Activated CD4-positive, alpha-beta T cell treated with anti-CD3 and anti-CD28 coated beads for 36 hours (primary cell): ENCODE measurements at regions of chr6 and their contacts with region 1.

Region 1: DNA sequence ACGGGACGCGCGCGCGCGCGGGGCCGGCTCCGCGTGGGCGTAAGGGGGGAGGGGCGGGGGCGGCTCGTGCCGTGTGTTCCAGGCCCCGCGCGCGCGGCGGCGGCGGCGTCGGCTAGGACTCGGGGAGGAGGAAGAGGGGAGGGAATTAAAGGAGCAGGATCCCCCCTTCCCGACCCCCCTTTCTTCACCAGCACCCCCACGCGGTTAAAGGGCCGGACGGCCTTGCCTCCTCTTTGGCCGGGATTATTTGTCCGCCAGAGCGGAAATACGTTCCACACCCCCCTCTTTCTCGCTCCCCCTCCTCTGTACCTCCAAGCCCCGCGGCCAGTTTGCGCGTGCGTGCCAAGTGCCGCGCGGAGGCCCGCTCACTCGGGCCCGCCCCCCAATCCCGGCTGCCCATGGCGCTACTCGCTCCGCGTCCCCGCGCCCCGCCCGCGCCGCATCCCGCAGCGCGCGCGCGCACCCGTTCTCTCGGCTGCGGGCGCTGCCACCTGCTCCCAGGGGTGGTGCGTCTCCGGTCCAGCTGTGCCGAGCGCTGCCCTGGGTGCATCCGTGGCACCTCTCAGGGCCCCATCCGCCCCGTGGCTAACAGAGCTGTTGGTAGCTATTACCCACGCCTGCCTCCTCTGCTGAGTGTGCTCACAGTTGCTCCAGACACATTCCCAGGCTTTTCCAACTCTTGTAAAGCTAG is at the start of gene ZBTB12:
- DNase-seq: peak; percentile 92
- ATAC-seq: peak; percentile 63
- H3K4me3 Mint-ChIP-seq: peak within 1 kb of the TSS; percentile 69
- H3K27ac Mint-ChIP-seq: peak within 1 kb of the TSS; percentile 78
- H3K4me1 Mint-ChIP-seq: peaks cover 25% of the 10 kb centered on the region
- H3K27me3 Mint-ChIP-seq: no peaks in the 10 kb centered on the region
- total RNA-seq, gene ZBTB12: 1.9 to 2.4 TPM

Region 2: DNA sequence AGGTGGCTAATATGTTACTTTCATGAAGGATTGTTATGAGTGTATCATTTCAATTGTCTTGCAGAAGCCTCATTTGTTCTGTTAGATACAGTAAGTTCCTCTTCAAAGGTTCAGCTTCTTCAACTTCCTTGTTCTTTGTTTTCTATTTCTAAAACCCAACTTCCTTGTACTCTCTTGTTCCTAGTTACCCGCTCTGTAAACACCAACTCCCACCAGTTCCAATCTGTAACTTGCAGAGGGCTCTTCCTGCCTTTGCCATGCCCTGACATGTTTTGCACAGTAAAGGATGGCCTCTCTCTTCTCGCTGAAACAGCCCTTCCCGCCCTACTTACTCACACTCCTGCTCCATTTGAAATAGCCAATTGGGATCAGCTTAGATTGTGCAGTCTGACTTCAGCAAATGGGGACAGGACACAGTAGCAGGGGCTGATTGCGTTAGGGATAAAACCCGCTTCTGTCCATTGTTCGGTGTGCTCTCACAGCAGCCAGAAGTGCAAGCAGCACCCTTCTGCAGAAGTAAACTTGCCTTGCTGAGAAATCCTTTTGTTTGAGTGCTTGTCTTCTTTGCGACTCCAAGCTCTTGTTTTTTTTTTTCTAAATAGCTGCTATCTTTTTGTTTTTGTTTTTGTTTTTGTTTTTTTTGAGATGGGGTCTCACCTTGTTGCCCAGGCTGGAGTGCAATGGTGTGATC is 685.7 kb before region 1 on chr6:
- CTCF ChIA-PET with region 1: no interaction called
- POLR2A ChIA-PET with region 1: no interaction called
- intact Hi-C with region 1: no loop called
- DNase-seq: no peak
- ATAC-seq: no peak
- H3K4me3 Mint-ChIP-seq: no peak overlapping the region
- H3K27ac Mint-ChIP-seq: no peak overlapping the region
- H3K4me1 Mint-ChIP-seq: peaks cover 3% of the 10 kb centered on the region
- H3K27me3 Mint-ChIP-seq: no peaks in the 10 kb centered on the region

Region 3: DNA sequence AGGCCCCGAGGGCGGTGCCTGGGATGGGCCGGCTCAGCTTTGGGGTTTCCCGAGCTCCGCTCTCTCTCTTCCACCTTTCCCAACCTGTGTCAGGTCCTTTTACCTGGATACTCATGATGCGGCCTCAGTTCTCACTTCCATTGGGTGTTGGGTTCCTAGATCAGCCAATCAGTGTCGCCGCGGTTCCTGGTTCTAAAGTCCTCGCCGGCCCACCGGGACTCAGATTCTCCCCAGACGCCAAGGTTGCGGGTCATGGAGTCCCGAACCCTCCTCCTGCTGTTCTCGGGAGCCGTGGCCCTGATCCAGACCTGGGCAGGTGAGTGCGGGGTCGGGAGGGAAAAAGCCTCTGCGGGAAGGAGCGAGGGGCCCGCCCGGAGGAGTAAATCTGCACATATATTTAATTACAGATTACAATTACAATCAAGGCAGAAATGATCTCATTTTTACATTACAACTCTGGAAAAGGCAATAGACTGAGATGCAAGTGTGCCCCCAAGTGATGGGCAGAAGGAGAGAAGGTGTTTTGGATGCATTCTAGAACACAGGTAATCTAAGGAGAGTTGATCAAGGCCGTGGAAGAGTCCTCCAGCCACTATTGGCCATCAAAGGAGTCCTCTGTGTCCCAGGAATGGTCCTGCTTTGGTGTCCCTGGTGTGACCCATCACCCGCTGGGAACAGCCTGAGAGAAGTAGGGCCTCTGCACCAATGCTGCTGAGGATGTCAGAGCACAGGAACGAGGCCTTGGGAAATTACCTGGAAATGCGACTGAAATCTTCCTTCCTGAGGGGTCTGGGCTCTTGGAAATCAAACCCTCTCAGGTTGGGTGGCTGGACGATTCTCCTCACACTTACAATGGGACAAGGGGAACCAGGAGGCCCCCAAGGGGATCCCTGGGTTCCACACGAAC is 438.9 kb before region 1 on chr6:
- CTCF ChIA-PET with region 1: no interaction called
- POLR2A ChIA-PET with region 1: no interaction called
- intact Hi-C with region 1: no loop called
- DNase-seq: peak; percentile 91
- ATAC-seq: peak; percentile 95
- H3K4me3 Mint-ChIP-seq: peak overlapping the region; percentile 100
- H3K27ac Mint-ChIP-seq: peak overlapping the region; percentile 97
- H3K4me1 Mint-ChIP-seq: peaks cover 53% of the 10 kb centered on the region
- H3K27me3 Mint-ChIP-seq: peaks cover 2% of the 10 kb centered on the region

Region 4: GRCh38 chr6:31834434-31835198 is 67.5 kb before region 1 on chr6:
- CTCF ChIA-PET with region 1: interaction called, 3 read pairs
- POLR2A ChIA-PET with region 1: no interaction called
- intact Hi-C with region 1: loop called (anchors 1 to 2 kb)
- DNase-seq: peak; percentile 85
- ATAC-seq: peak; percentile 63
- H3K4me3 Mint-ChIP-seq: peak overlapping the region; percentile 90
- H3K27ac Mint-ChIP-seq: peak overlapping the region; percentile 95
- H3K4me1 Mint-ChIP-seq: peaks cover 40% of the 10 kb centered on the region
- H3K27me3 Mint-ChIP-seq: no peaks in the 10 kb centered on the region

Region 5: DNA sequence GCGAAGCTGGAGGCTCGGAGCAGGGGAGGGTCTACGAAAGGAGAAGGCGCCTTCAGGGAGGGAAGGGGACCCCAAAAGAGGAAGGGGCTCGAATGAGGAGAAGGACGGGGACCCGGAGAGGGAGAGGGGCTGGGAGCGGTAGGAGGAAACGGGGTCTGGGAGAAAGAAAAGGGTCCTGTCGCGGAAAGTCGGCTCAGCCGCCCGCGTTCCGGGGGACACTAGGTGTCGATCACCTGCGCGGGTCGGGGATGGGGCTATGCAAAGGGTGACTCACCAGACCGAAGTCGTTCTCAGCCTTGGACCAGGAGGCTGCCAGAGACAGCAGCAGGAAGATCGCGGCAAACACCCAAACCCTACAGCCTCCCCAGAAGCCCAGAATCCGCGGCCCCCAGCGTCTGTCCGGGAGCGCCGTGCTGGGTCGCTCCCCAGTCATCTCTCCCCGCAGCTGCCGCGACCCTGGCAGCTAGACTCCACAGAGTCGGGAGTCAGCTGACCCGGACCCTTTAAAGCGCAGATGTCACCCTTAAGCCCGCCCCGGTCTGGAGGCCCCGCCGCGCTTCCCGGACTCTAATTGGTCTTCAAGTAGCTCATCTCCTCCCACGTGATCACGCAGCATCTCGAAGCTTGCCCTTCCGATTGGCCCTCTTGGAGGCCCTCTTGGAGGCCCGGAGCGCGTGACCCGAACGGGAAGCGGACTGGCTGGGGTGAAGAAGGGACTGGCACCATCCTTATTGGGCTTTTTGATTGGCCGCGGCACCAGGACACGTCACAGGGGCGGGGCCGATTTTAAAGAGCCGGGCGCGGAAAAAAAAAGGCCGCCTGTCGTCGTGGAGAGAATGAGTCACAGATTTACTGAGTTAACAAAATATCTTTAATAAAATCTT is 39.5 kb before region 1 on chr6 and contains the start of gene NEU1:
- CTCF ChIA-PET with region 1: interaction called, 3 read pairs
- POLR2A ChIA-PET with region 1: interaction called, 3 read pairs
- intact Hi-C with region 1: loop called (anchors 1 to 5 kb)
- DNase-seq: peak; percentile 100
- ATAC-seq: peak; percentile 98
- H3K4me3 Mint-ChIP-seq: peak within 1 kb of the TSS; percentile 90
- H3K27ac Mint-ChIP-seq: peak within 1 kb of the TSS; percentile 91
- H3K4me1 Mint-ChIP-seq: peaks cover 27% of the 10 kb centered on the region
- H3K27me3 Mint-ChIP-seq: no peaks in the 10 kb centered on the region
- total RNA-seq, gene NEU1: 11.6 to 11.8 TPM

Region 6: DNA sequence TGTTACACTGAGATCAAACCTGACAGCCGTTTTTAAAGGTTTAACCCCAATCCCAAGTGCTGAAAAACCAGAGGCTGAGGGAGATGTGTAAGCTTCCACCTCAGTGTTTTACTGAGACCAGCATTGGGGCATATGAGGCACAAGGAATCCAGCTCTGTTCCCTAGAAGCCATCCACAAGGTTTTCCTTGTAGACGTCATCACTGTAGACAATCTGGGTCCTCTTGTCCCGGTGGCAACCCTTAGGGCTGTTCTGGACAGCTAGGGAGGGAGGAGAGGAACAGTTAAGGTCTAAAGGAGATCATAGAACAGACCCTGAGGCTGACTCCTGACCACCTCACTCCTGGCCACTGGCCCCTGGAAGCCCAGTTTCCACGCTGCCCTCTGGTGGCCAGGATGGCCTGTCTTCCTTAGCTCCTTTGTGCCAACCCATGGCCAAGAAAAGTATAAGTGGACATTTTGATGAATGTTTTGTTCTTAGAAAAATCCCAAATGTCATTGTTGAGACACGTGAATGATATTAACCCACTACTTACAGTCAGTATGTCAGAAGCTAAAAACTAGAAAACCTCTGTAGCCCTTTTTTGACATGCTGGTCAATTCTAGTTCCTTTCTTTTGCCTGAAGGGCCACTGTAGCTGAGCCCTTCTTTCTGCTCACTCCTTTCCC is 50.2 kb after region 1 on chr6:
- CTCF ChIA-PET with region 1: interaction called, 6 read pairs
- POLR2A ChIA-PET with region 1: interaction called, 3 read pairs
- intact Hi-C with region 1: loop called in 1 of 2 experiments (anchors 5 kb)
- DNase-seq: peak; percentile 69
- ATAC-seq: peak; percentile 64
- H3K4me3 Mint-ChIP-seq: no peak overlapping the region
- H3K27ac Mint-ChIP-seq: peak overlapping the region; percentile 3
- H3K4me1 Mint-ChIP-seq: peaks cover 2% of the 10 kb centered on the region
- H3K27me3 Mint-ChIP-seq: no peaks in the 10 kb centered on the region

Region 7: DNA sequence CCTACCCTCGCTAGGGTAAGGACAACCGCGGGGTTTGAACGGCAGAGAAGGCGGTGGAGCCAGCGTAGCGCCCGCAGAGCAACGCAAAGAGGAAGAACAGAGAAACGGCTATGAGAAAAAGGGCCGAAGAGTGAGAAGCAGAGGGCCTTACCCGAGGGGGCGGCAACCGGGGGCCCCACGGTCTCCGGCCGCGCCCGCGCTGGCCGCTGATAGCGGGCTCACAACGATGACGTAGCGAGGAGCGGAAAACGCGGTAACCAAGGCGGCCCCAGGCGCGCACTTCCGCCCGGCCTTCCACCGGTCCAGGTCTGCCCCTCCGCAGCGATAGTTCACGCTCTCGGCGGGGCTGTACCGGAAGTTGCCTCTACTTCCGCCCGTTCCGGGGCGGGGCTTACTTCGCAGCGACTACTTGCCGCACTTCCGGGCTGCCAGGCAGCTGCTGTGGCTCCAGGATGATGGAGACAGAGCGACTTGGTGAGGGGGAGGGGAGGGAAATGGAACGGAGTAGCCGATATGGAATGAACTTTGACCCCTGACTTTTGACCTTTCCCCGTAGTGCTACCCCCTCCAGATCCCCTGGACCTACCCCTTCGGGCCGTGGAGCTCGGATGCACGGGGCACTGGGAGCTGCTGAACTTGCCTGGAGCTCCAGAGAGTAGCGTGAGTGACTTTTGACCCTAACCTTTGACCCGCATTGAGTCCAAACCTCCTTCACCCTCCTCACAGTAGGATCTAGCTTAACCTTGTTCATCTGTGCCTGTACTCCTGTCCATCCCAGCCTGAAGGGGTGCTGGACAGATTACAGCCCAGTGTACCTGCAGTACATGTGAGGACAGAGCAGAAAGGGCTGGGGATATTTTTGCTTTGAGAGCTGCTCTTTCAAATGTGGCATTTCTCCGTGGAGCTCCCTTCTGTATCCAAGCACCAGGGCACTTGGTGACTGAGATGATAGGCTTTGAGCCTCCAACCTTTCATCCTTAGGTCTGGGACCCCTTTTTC is 56.9 kb after region 1 on chr6 and contains the starts of genes NELFE and SKIC2:
- CTCF ChIA-PET with region 1: no interaction called
- POLR2A ChIA-PET with region 1: interaction called, 3 read pairs
- intact Hi-C with region 1: loop called (anchors 1 to 5 kb)
- DNase-seq: peak; percentile 99
- ATAC-seq: peak; percentile 99
- H3K4me3 Mint-ChIP-seq: peak within 1 kb of the TSS; percentile 95
- H3K27ac Mint-ChIP-seq: peak within 1 kb of the TSS; percentile 98
- H3K4me1 Mint-ChIP-seq: peaks cover 34% of the 10 kb centered on the region
- H3K27me3 Mint-ChIP-seq: no peaks in the 10 kb centered on the region
- total RNA-seq, gene NELFE: 74.3 to 95.1 TPM
- total RNA-seq, gene SKIC2: 90.2 to 104 TPM

Region 8: DNA sequence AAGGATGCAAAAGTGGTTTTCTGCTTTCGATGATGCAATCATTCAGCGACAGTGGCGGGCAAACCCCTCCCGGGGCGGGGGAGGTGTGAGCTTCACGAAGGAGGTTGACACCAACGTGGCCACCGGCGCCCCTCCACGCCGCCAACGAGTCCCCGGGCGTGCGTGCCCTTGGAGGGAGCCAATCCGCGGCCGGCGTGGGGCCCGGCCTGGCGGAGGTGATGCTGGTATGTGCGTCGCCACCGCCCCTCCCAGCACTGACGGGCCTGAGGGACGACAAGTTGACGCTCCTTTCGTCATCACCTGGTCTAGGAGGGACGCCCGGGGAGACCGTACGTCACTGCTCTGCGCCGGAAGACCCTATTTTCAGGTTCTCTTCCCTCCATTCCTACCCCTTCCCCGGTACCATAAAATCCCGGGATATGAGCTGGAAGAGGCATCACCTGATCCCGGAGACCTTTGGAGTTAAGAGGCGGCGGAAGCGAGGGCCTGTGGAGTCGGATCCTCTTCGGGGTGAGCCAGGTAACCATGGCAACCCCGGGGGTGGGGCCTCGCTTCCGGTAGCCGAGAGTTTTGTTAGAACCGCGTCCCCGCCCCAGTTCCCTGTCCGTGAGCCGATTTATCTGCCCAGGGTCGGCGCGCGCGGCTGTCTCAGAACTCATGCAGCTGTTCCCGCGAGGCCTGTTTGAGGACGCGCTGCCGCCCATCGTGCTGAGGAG is 70.1 kb after region 1 on chr6 and contains the start of gene DXO:
- CTCF ChIA-PET with region 1: no interaction called
- POLR2A ChIA-PET with region 1: no interaction called
- intact Hi-C with region 1: loop called in 1 of 2 experiments (anchors 1 kb)
- DNase-seq: peak; percentile 99
- ATAC-seq: peak; percentile 96
- H3K4me3 Mint-ChIP-seq: peak within 1 kb of the TSS; percentile 96
- H3K27ac Mint-ChIP-seq: peak within 1 kb of the TSS; percentile 99
- H3K4me1 Mint-ChIP-seq: peaks cover 43% of the 10 kb centered on the region
- H3K27me3 Mint-ChIP-seq: no peaks in the 10 kb centered on the region
- total RNA-seq, gene DXO: 12.6 to 13.9 TPM

Region 9: DNA sequence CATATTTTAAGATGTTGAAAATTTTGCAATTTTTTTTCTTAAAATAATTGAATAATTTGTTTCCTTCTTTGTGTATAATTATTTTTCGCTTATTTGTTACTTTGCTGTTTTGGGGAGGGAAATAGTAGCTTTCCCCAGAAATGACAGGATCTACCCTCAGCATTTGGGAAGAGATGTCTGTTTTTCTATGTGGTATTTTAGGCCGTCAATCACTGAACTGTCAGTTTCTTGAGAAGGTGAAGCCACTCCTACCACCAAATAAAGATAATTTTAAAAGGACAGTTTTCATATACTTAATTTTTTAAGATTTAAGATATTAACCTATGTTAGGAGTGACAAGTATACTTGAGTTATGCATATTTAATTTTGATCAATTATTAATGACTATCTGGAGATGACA is 438.1 kb after region 1 on chr6:
- CTCF ChIA-PET with region 1: no interaction called
- POLR2A ChIA-PET with region 1: no interaction called
- intact Hi-C with region 1: no loop called
- DNase-seq: no peak
- ATAC-seq: no peak
- H3K4me3 Mint-ChIP-seq: no peak overlapping the region
- H3K27ac Mint-ChIP-seq: no peak overlapping the region
- H3K4me1 Mint-ChIP-seq: peaks cover 4% of the 10 kb centered on the region
- H3K27me3 Mint-ChIP-seq: peaks cover 6% of the 10 kb centered on the region